GM12878 (cell line): ENCODE measurements at regions of chr12 and their contacts with region 1.

Region 1: GRCh38 chr12:25107920-25108319 is 87.0 kb downstream of the DNAI7 start:
- DNase-seq: peak; percentile 64
- ATAC-seq: peak; percentile 86
- H3K4me3 ChIP-seq: no peak overlapping the region
- H3K27ac ChIP-seq: peak overlapping the region; percentile 60
- H3K4me1 ChIP-seq: peaks cover 16% of the 10 kb centered on the region
- H3K27me3 ChIP-seq: no peaks in the 10 kb centered on the region
- CTCF ChIP-seq: no peak
- EP300 ChIP-seq: peak; percentile 33 to 95; a peak in 3 of 4 replicates
- POLR2A ChIP-seq: no peak
- RAD21 ChIP-seq: no peak

Region 2: DNA sequence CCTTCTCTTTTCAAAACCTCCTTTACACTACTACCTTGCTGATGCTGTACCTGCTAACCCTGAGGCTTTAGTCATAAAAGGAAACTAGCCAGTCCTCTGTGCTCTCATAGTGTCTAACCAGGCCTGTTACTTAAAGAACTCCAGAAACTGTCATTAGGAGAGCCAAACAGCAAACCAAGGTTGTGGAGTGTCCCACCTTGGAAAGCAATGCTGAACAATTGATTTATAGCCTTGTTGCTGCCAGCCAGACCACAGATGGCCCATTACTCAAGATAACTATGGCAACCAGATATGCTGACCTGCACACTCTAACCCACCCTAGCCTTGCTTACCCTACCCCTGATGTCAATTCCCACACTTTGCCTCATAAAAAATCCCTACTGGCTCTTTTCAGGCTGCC is 132.5 kb before region 1 on chr12:
- CTCF ChIA-PET with region 1: no interaction called
- POLR2A ChIA-PET with region 1: no interaction called
- RAD21 ChIA-PET with region 1: no interaction called
- SMC1A ChIA-PET with region 1: no interaction called
- in situ Hi-C with region 1: no loop called
- intact Hi-C with region 1: no loop called
- DNase-seq: no peak
- ATAC-seq: no peak; the same call in 2 of the 3 replicates
- H3K4me3 ChIP-seq: no peak overlapping the region
- H3K27ac ChIP-seq: no peak overlapping the region
- H3K4me1 ChIP-seq: peaks cover 11% of the 10 kb centered on the region
- H3K27me3 ChIP-seq: no peaks in the 10 kb centered on the region
- CTCF ChIP-seq: no peak
- EP300 ChIP-seq: no peak
- POLR2A ChIP-seq: no peak
- RAD21 ChIP-seq: no peak

Region 3: DNA sequence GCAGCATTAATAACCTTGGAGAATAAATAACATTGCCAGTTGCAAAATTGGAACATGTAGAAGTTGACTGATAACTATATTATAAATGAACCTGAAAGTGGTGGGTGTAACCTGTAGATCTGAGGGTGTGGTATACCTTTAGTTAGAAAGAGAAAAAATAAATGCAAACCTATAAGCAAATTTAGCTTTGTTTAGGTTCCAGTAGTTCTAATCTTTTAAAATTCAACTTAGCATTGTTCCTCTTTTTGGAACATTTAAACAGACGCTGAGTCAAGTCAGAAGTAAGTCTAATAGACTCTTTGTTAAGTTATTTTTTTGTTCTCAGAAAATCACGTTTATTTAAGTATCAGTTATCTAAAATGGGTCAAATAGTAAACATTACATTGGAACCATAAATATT is 33.0 kb before region 1 on chr12:
- CTCF ChIA-PET with region 1: interaction called, 5 read pairs
- POLR2A ChIA-PET with region 1: no interaction called
- RAD21 ChIA-PET with region 1: interaction called, 3 read pairs
- SMC1A ChIA-PET with region 1: interaction called, 4 read pairs
- in situ Hi-C with region 1: no loop called
- intact Hi-C with region 1: loop called (anchors 5 kb)
- DNase-seq: no peak
- ATAC-seq: peak; percentile 62
- H3K4me3 ChIP-seq: peak overlapping the region; percentile 15; the same call in 1 of the 2 replicates
- H3K27ac ChIP-seq: no peak overlapping the region
- H3K4me1 ChIP-seq: peaks cover 33% of the 10 kb centered on the region
- H3K27me3 ChIP-seq: no peaks in the 10 kb centered on the region
- CTCF ChIP-seq: no peak
- EP300 ChIP-seq: peak; percentile 19 to 39; a peak in 2 of 4 replicates
- POLR2A ChIP-seq: no peak
- RAD21 ChIP-seq: no peak

Region 4: DNA sequence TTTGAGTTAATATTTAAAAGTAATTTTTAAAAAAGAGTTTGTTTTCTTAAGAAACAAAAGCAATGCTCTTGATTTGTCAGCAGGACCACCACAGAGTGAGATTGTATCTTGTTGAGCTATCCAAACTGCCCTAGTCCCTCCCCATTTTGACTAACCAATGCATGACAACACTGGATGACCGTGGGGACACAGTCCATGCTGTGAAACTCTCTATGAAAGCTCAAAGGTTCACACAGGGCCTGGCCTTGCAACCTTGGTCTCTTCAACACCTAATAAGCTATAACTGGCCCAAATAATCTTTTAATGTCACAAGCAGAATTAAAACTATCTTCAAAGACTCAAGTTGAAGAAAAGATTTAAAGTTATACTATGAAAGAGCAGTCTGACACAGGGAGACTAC is 100.6 kb after region 1 on chr12:
- CTCF ChIA-PET with region 1: no interaction called
- POLR2A ChIA-PET with region 1: no interaction called
- RAD21 ChIA-PET with region 1: no interaction called
- SMC1A ChIA-PET with region 1: no interaction called
- in situ Hi-C with region 1: no loop called
- intact Hi-C with region 1: no loop called
- DNase-seq: no peak
- ATAC-seq: no peak
- H3K4me3 ChIP-seq: no peak overlapping the region
- H3K27ac ChIP-seq: no peak overlapping the region
- H3K4me1 ChIP-seq: no peaks in the 10 kb centered on the region
- H3K27me3 ChIP-seq: no peaks in the 10 kb centered on the region
- CTCF ChIP-seq: no peak
- EP300 ChIP-seq: no peak
- POLR2A ChIP-seq: no peak
- RAD21 ChIP-seq: no peak

Region 5: DNA sequence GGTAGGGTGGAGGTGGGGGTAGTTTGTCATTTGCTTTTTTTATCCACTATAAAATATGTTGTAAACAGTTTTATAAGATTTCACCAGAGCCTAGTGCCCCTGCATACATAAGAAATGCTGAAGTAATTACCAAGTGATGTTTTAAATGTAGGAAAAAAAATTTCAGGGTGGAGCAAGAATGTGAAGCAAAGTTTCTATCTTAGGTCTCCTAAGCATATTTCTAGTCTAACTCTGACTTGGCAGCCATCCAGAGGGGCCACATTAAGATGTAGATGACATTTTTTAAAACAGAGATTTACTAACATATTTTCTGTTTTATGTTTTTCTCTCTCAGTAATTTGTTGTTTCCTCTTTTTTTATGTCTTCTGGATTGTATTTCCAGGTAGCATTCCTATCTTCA is 158.6 kb after region 1 on chr12:
- CTCF ChIA-PET with region 1: no interaction called
- POLR2A ChIA-PET with region 1: no interaction called
- RAD21 ChIA-PET with region 1: no interaction called
- SMC1A ChIA-PET with region 1: no interaction called
- in situ Hi-C with region 1: no loop called
- intact Hi-C with region 1: no loop called
- DNase-seq: no peak
- ATAC-seq: no peak
- H3K4me3 ChIP-seq: no peak overlapping the region
- H3K27ac ChIP-seq: no peak overlapping the region
- H3K4me1 ChIP-seq: peaks cover 24% of the 10 kb centered on the region
- H3K27me3 ChIP-seq: no peaks in the 10 kb centered on the region
- CTCF ChIP-seq: no peak
- EP300 ChIP-seq: no peak
- POLR2A ChIP-seq: no peak
- RAD21 ChIP-seq: no peak

Region 6: DNA sequence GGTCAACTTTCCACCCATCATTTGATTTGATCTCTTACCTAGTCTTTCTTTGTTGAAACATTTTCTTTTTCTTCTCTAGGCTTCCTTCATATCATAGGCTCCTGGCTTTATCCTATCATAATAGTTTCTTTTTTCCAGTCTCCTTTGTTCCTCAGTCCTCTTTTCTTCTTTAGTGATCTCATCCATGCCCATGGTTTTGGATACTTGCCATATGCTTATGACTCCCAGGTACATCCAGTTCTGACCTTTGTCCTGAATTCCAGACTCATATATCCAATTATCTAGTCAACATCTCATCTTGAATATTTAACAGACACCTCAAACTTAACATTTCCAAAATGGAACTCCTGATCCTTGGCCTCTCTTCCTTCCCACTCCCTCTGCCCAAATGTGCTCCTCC is 178.9 kb after region 1 on chr12:
- CTCF ChIA-PET with region 1: no interaction called
- POLR2A ChIA-PET with region 1: no interaction called
- RAD21 ChIA-PET with region 1: no interaction called
- SMC1A ChIA-PET with region 1: no interaction called
- in situ Hi-C with region 1: no loop called
- intact Hi-C with region 1: no loop called
- DNase-seq: no peak
- ATAC-seq: no peak
- H3K4me3 ChIP-seq: no peak overlapping the region
- H3K27ac ChIP-seq: no peak overlapping the region
- H3K4me1 ChIP-seq: no peaks in the 10 kb centered on the region
- H3K27me3 ChIP-seq: no peaks in the 10 kb centered on the region
- CTCF ChIP-seq: no peak
- EP300 ChIP-seq: no peak
- POLR2A ChIP-seq: no peak
- RAD21 ChIP-seq: no peak